ENCODE measurements at regions of chr2 and their contacts with region 1.

Region 1: GRCh38 chr2:70806013-70806412 is 14.4 kb downstream of the CLEC4F start:
- DNase-seq: no peak
- ATAC-seq: no peak
- H3K4me3 ChIP-seq: no peak overlapping the region
- H3K27ac ChIP-seq: no peak overlapping the region
- H3K4me1 ChIP-seq: no peaks in the 10 kb centered on the region
- H3K27me3 ChIP-seq: no peaks in the 10 kb centered on the region

Region 2: GRCh38 chr2:70385966-70386595 is 419.9 kb before region 1 on chr2:
- intact Hi-C with region 1: no loop called
- DNase-seq: no peak
- ATAC-seq: no peak
- H3K4me3 ChIP-seq: no peak overlapping the region
- H3K27ac ChIP-seq: no peak overlapping the region
- H3K4me1 ChIP-seq: no peaks in the 10 kb centered on the region
- H3K27me3 ChIP-seq: no peaks in the 10 kb centered on the region

Region 3: DNA sequence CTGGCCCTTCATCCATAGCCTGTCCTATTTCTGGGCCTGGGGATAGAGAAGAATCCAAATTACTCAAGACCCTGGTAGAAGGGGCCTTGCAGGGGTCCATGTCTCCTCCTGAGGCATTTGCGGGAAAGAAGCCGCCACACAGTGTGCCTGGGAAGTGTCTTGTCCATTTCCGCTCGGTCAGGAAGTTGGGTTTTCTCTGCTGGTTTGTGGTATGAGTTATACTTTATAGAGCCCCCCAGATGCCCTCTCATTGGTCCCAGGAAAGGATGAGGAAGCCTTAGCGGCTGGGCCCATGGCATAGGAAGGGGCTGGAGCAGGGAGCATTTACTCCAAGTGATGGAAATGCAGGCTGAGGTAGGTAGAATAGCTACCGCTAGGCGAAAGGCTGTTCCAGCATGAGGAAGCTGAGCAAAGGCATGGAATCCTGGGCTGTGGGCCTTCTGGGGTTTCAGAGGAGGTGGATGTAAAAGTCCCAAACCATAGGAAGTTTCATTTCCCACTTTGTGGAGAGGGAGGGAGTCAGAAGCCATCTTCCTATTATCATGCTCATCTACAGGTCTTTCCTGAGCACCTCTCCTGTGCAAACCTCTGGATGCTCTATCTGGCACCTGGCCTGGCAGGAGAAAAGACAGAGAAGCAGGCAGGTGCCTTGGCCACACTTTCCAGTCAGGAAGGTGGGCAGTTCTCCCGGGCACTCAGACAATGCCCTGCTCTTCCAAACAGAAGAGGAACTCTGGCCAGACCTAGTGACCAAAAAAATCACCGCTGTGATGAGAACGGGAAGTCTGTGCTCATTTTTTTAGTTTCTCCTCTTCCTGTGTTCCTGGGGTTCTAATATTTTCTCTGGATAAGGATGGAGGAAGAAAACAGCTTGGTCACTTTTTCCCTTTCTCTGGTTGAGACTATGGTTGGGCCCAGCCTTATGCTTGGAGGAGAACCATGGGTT is 32.2 kb after region 1 on chr2:
- intact Hi-C with region 1: loop called in 1 of 2 experiments (anchors 2 kb)
- DNase-seq: no peak
- ATAC-seq: no peak
- H3K4me3 ChIP-seq: no peak overlapping the region
- H3K27ac ChIP-seq: no peak overlapping the region
- H3K4me1 ChIP-seq: no peaks in the 10 kb centered on the region
- H3K27me3 ChIP-seq: no peaks in the 10 kb centered on the region